ENCODE measurements at regions of chr2 and their contacts with region 1.

Region 1: DNA sequence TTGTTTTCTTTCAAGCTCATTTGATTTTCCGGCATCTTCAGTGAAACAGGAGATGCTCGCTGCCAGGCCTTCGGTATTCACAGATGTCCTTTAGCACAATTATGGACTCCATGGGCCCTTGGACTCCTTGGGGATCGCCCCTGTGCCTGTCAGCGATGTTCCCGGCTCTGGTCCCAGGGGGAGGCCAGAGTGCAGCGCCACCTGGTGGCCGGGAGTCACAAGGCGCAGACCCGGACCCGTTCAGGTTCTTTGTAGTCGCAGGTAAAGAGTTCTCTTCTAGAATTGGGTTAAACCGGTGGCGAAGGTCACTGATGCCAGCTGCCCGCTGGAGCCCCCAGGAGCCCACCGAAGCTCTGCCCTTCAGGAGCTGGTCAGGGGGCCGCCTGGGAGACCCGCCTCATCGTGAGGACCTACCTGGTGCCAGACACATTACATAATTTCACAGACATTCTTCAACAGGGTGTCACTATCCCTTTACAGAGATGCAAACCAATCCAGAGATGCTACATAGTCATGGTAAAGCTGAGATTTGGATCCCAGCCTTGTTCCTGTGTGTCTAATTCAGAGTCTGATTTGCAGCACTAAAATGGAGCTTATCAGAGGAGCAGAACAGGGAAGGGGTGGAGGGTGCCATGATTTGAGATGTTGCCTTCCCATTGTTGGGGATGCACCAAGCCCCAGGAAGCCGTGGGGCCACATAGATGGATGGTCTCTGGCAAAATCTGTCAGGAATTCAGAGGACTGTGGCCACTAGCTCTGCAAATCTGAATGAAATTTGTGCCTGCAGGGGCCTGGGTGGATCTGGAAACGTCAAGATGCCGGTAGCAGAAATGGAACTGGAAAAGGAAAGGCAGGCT is 6.0 kb upstream of the INPP5D start:
- DNase-seq: peak; percentile 82
- H3K27ac ChIP-seq: no peak overlapping the region
- CTCF ChIP-seq: peak; percentile 84

Region 2: GRCh38 chr2:232981381-232982360 is 72.5 kb before region 1 on chr2:
- CTCF ChIA-PET with region 1: interaction called, 11 read pairs
- POLR2A ChIA-PET with region 1: no interaction called
- DNase-seq: no peak
- H3K27ac ChIP-seq: 0 out of 2 replicates have a peak overlapping the region, but pooled peaks have one; percentile 21
- CTCF ChIP-seq: no peak

Region 3: GRCh38 chr2:233039212-233039845 is 14.8 kb before region 1 on chr2:
- CTCF ChIA-PET with region 1: interaction called, 11 read pairs
- POLR2A ChIA-PET with region 1: no interaction called
- DNase-seq: no peak
- H3K27ac ChIP-seq: no peak overlapping the region
- CTCF ChIP-seq: no peak

Measured in RWPE1 (cell line).